A549 (cell line): ENCODE measurements at regions of chr6 and their contacts with region 1.

Region 1: DNA sequence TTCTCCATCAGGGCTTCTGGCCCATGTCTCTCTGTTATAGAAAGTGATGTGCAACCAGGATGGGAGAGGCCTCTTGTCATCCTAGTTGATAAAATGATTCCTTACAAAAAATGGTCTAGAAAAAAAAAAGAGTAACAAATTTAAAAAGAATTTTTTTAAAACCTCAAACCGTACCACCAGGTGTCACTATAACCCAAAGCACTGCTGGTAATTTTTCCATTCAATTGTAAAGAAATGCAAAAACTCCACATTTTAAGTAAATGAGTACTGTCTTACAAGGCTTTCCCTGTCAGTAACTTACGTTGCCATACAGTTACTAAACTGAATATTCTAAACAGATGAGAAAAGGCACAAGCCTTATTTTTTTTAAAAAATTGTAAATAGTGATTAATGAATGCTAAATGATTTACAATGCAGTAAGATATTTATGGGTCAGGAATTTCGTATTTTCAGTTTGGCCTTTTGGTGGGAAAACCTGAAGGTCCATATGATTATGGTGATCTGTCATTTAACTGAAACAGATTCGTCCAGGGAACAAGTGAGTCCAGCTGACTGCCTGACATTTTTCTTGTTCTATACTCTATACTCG is 95.4 kb downstream of the OGFRL1 start:
- DNase-seq: peak in 1 of 2 experiments; percentile 48
- ATAC-seq: peak in 1 of 2 experiments; percentile 23; a peak in 2 of 6 replicates
- H3K4me3 ChIP-seq: no peak overlapping the region
- H3K27ac ChIP-seq: peak overlapping the region; percentile 1 to 70; a peak in 3 of 6 replicates
- H3K4me1 ChIP-seq: peaks cover 67% of the 10 kb centered on the region
- CTCF ChIP-seq: peak; percentile 78
- EP300 ChIP-seq: no peak
- POLR2A ChIP-seq: no peak
- RAD21 ChIP-seq: peak; percentile 80 to 87

Region 2: DNA sequence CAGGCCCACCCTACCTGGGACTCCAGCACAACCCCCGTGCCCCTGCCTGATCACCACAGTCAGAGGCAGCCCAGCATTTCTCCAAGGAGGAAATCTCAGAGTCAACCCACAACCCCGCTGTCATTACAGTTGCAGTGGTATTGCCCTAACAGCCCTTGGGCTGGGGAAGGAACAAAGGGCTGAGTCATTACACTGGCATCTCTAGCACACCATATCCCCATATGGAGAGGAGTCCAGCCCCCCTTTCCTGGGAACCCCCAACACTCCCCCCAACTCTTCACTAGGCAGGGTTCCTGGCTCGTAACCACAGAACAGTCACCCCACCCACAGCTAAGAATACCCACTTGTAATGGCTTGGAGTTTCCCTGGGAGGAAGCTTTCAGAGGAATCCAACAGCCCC is 244.7 kb before region 1 on chr6:
- CTCF ChIA-PET with region 1: no interaction called
- POLR2A ChIA-PET with region 1: no interaction called
- DNase-seq: no peak
- ATAC-seq: no peak
- H3K4me3 ChIP-seq: no peak overlapping the region
- H3K27ac ChIP-seq: no peak overlapping the region
- H3K4me1 ChIP-seq: no peaks in the 10 kb centered on the region
- CTCF ChIP-seq: no peak
- EP300 ChIP-seq: no peak
- POLR2A ChIP-seq: no peak
- RAD21 ChIP-seq: no peak

Region 3: DNA sequence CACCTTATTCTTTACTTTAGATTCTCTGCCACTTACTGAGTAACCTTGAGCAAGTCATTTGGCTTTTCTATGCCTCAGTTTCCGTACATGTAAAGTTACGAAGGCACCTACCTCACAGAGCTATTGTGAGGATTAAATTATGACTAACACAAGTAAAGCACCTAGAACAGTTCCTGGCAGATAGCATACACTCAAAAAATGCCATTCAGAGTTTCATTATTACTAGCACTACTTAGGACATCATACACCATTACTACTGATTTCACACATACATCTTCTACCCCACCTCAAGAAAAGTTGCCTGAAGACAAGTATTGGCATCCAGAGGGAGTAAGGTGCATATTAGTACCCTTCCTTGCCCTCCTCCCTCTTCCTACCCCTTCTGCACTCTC is 12.4 kb after region 1 on chr6:
- CTCF ChIA-PET with region 1: interaction called, 11 read pairs
- POLR2A ChIA-PET with region 1: no interaction called
- DNase-seq: no peak
- ATAC-seq: 0 out of 6 replicates have a peak, but pooled peaks of 1 of the 2 experiments have one; percentile 8
- H3K4me3 ChIP-seq: no peak overlapping the region
- H3K27ac ChIP-seq: peak overlapping the region; percentile 78 to 83
- H3K4me1 ChIP-seq: peaks cover 100% of the 10 kb centered on the region
- CTCF ChIP-seq: no peak
- EP300 ChIP-seq: no peak
- POLR2A ChIP-seq: no peak
- RAD21 ChIP-seq: no peak

Region 4: GRCh38 chr6:71510057-71510713 is 126.2 kb after region 1 on chr6:
- CTCF ChIA-PET with region 1: interaction called, 13 read pairs
- POLR2A ChIA-PET with region 1: no interaction called
- DNase-seq: peak; percentile 25 to 57
- ATAC-seq: peak; percentile 62 to 83; a peak in 5 of 6 replicates
- H3K4me3 ChIP-seq: no peak overlapping the region
- H3K27ac ChIP-seq: no peak overlapping the region
- H3K4me1 ChIP-seq: 0 out of 3 replicates have a peak, but pooled peaks cover 8% of the 10 kb centered on the region
- CTCF ChIP-seq: peak; percentile 58
- EP300 ChIP-seq: no peak
- POLR2A ChIP-seq: no peak
- RAD21 ChIP-seq: peak; percentile 85 to 86

Region 5: GRCh38 chr6:71544028-71544427 is 160.0 kb after region 1 on chr6:
- CTCF ChIA-PET with region 1: no interaction called
- POLR2A ChIA-PET with region 1: no interaction called
- DNase-seq: no peak
- ATAC-seq: no peak
- H3K4me3 ChIP-seq: no peak overlapping the region
- H3K27ac ChIP-seq: no peak overlapping the region
- H3K4me1 ChIP-seq: no peaks in the 10 kb centered on the region
- CTCF ChIP-seq: no peak
- EP300 ChIP-seq: no peak
- POLR2A ChIP-seq: no peak
- RAD21 ChIP-seq: no peak